Mammary epithelial cell (primary cell): ENCODE measurements at regions of chr17 and their contacts with region 1.

Region 1: GRCh38 chr17:66466840-66467367 is 164.5 kb downstream of the PRKCA start:
- DNase-seq: peak; percentile 98
- H3K4me3 ChIP-seq: peak overlapping the region in 1 of 3 experiments; percentile 21
- H3K27ac ChIP-seq: peak overlapping the region; percentile 83
- H3K4me1 ChIP-seq: peaks cover 43% of the 10 kb centered on the region
- H3K27me3 ChIP-seq: no peaks in the 10 kb centered on the region
- CTCF ChIP-seq: no peak

Region 2: DNA sequence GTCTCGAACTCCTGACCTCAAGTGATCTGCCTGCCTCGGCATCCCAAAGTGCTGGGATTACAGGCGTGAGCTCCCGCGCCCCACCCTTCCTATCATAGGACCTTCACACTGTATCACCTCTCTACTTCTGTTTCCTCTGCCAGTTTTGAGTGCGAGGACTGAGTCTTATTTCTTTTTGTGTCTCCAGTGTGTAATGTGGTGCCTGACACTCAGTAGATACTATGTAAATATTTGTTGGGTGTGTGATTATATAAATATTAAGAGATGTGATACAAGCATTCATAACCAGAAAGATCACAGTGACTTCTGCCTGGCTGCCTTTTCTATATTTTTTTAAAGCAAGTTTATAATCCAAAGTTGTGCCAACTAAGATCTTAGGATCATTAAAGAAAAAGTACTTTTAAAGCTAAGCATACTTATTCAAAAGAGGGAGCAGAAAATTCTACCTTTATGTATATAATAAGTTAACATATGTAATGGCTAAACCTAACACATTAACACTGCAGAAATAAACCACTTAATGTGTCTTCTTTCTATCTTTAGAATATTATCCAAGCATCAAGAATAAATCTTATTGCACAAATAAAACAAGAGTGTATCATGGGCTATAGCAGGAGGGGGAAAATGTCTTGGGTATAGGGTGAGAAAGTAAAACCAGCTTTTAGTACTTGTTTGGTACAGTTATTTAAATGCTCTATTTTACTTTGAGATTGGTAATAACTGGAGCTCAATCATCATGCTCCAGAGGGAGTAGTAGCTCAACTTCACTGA is 153.8 kb before region 1 on chr17:
- CTCF ChIA-PET with region 1: no interaction called
- dilution Hi-C with region 1: no loop called
- in situ Hi-C with region 1: no loop called
- intact Hi-C with region 1: no loop called
- DNase-seq: no peak
- H3K4me3 ChIP-seq: no peak overlapping the region
- H3K27ac ChIP-seq: no peak overlapping the region
- H3K4me1 ChIP-seq: no peaks in the 10 kb centered on the region
- H3K27me3 ChIP-seq: no peaks in the 10 kb centered on the region
- CTCF ChIP-seq: no peak

Region 3: DNA sequence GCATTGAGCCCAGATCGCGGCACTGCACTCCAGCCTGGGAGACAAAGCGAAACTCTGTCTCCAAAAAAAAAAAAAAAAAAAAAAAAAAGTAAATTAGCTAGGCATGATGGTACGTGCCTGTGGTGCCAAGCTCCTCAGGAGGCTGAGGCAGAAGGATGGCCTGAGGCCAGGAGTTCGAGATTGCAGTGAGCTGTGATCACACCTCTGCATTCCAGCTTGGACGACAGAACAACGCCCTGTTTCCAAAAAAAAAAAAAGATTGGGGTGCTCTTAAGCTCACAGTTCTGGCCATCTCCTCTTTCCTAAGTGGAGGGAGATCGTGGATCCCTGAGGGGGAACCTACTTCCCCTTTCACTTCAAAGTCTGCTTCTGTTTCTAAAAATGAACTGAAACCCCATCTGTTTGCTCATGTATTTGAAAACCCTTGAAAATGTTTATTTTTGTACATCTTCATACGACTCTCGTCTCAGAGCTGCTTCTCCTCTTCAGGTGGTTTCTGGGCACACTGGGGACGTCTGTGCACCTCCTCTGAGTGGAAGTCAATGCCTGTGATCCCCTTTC is 25.7 kb before region 1 on chr17:
- CTCF ChIA-PET with region 1: no interaction called
- dilution Hi-C with region 1: no loop called
- in situ Hi-C with region 1: no loop called
- intact Hi-C with region 1: loop called (anchors 2 kb)
- DNase-seq: peak; percentile 69
- H3K4me3 ChIP-seq: no peak overlapping the region
- H3K27ac ChIP-seq: peak overlapping the region; percentile 58
- H3K4me1 ChIP-seq: peaks cover 20% of the 10 kb centered on the region
- H3K27me3 ChIP-seq: no peaks in the 10 kb centered on the region
- CTCF ChIP-seq: no peak

Region 4: GRCh38 chr17:66491213-66491612 is 24.3 kb after region 1 on chr17:
- CTCF ChIA-PET with region 1: no interaction called
- dilution Hi-C with region 1: no loop called
- in situ Hi-C with region 1: no loop called
- intact Hi-C with region 1: no loop called
- DNase-seq: no peak
- H3K4me3 ChIP-seq: no peak overlapping the region
- H3K27ac ChIP-seq: no peak overlapping the region
- H3K4me1 ChIP-seq: peaks cover 24% of the 10 kb centered on the region
- H3K27me3 ChIP-seq: no peaks in the 10 kb centered on the region
- CTCF ChIP-seq: no peak

Region 5: GRCh38 chr17:66508896-66509843 is 42.3 kb after region 1 on chr17:
- CTCF ChIA-PET with region 1: interaction called, 9 read pairs
- dilution Hi-C with region 1: no loop called
- in situ Hi-C with region 1: no loop called
- intact Hi-C with region 1: loop called (anchors 2 kb)
- DNase-seq: peak; percentile 96
- H3K4me3 ChIP-seq: no peak overlapping the region
- H3K27ac ChIP-seq: peak overlapping the region; percentile 90
- H3K4me1 ChIP-seq: peaks cover 51% of the 10 kb centered on the region
- H3K27me3 ChIP-seq: no peaks in the 10 kb centered on the region
- CTCF ChIP-seq: no peak

Region 6: GRCh38 chr17:66541461-66542128 is 74.7 kb after region 1 on chr17:
- CTCF ChIA-PET with region 1: no interaction called
- dilution Hi-C with region 1: no loop called
- in situ Hi-C with region 1: no loop called
- intact Hi-C with region 1: loop called (anchors 5 kb)
- DNase-seq: peak; percentile 74
- H3K4me3 ChIP-seq: no peak overlapping the region
- H3K27ac ChIP-seq: peak overlapping the region; percentile 66
- H3K4me1 ChIP-seq: peaks cover 47% of the 10 kb centered on the region
- H3K27me3 ChIP-seq: no peaks in the 10 kb centered on the region
- CTCF ChIP-seq: no peak

Region 7: DNA sequence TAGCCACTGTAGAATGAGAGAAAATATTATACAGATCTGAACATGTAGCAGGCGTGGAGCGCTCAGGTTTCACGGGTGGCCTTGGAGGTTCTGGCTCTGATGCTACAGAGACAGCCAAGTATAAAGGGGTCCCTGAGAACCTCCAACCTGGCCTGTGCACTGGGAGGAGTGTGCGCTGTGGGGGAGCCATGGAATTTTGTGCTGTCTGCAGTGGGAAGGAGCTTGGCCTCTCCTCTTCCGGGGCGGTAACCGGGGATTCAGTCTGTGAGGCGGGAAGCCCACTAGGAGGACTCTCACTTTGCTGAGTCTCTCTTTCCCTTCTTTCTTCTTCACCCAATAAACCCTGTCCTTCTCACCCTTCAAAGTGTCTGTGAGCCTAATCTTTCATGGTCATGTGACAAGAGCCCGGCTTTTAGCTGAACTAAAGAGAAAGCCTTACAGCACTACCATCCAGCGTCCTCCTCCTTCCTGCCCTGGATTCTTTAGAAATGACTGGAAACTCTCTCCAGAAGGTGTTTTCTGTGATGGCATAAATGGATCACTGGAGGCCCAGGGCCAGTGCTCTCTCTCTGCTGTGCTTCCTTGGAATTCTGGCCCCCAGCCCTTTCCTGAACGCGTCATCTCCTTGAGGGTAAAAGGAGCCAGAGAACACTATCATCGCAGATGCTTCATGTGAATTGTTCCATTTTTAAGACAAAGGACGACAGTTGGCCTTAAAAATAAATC is 135.9 kb after region 1 on chr17:
- CTCF ChIA-PET with region 1: no interaction called
- dilution Hi-C with region 1: no loop called
- in situ Hi-C with region 1: no loop called
- intact Hi-C with region 1: no loop called
- DNase-seq: no peak
- H3K4me3 ChIP-seq: no peak overlapping the region
- H3K27ac ChIP-seq: no peak overlapping the region
- H3K4me1 ChIP-seq: no peaks in the 10 kb centered on the region
- H3K27me3 ChIP-seq: no peaks in the 10 kb centered on the region
- CTCF ChIP-seq: no peak